A673 (cell line): ENCODE measurements at regions of chr17 and their contacts with region 1.

Region 1: GRCh38 chr17:60573201-60574051 is 26.6 kb upstream of the PPM1D start:
- DNase-seq: no peak
- H3K4me3 ChIP-seq: no peak overlapping the region
- H3K27ac ChIP-seq: no peak overlapping the region
- H3K4me1 ChIP-seq: no peaks in the 10 kb centered on the region
- H3K27me3 ChIP-seq: no peaks in the 10 kb centered on the region
- CTCF ChIP-seq: no peak

Region 2: DNA sequence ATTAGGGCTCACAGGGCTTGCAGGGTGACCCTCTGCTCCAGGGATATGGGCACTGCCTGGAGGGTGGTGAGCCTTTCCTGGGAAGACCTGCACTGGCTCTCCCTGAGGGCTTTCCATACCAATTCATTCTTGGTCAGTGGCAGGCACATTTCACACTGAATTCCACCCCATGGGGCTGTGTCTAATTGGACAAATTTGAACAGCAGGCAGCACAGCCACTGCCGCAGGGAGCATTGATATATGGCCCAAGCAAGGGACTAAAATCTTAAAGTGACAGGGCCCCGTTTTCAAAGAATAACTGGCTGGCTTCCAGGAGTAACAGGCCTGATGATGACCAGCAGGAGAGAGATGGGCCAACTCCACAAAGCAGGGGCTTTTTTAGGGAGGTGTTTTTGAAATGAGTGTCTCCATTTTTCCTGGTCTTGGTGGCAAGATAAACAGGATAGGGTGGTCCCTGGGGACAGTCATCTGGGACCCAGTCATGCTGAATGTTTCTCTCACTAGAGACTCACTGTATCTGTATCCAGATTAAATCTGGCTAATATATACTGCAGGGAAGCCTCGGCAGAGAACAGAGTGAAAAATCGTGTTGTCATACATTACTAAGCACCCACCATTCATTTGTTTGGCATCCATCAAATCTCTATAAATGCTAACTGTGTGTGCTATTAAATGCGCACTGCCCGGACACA is 752.1 kb after region 1 on chr17:
- CTCF ChIA-PET with region 1: interaction called, 12 read pairs
- POLR2A ChIA-PET with region 1: no interaction called
- intact Hi-C with region 1: no loop called
- DNase-seq: peak; percentile 67
- H3K4me3 ChIP-seq: no peak overlapping the region
- H3K27ac ChIP-seq: no peak overlapping the region
- H3K4me1 ChIP-seq: peaks cover 17% of the 10 kb centered on the region
- H3K27me3 ChIP-seq: no peaks in the 10 kb centered on the region
- CTCF ChIP-seq: no peak